PC-9 (cell line): ENCODE measurements at regions of chr1 and their contacts with region 1.

Region 1: DNA sequence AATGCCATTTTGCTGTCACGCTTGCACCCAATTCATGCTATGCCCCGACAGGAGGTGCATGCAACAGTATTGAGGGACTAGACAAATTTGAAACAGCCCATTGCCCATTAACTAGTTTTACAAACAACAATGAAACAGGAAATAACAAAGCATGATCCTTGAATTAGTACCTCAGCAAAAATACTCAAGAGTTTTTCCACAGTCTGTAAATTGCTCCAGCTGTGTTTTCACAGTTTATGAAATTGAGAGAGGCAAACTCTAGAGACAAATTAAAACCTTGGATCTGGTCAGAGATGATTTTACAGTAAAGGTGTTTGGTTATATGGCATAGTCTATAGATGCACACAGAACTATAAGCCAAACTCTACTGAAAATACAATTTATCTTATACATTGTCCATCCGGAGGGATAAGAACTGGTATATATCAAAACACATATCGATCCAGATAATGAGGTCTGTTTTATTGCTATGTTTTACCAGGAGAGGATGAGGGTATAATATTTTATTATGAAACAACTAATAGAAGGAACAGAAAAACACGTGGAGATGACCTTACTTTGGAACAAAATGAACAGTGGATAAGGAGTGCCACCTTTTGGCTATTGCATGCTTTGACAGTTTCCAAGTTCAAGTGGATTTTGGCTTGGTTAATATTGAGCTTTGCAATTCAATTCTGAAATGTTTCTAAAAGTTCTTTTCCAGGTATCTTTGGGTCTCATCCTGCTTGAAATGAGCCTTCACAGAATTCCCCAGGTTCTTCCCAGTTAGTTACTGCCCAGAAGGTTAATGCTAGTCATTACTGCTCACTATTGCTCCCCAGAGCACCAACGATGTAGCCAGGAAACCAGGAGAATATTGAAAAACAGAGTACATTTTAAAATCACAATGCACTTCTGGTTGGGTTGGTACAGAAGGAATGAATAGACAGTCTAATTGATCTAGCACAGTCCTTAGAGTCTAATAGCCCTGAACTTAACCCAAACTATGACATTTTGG is 45.7 kb downstream of the ZC3H11B start:
- DNase-seq: no peak
- H3K4me3 ChIP-seq: no peak overlapping the region
- H3K27ac ChIP-seq: no peak overlapping the region
- H3K4me1 ChIP-seq: peaks cover 19% of the 10 kb centered on the region
- H3K27me3 ChIP-seq: no peaks in the 10 kb centered on the region
- CTCF ChIP-seq: peak; percentile 65

Region 2: GRCh38 chr1:219283541-219283940 is 283.7 kb before region 1 on chr1:
- CTCF ChIA-PET with region 1: no interaction called
- POLR2A ChIA-PET with region 1: no interaction called
- intact Hi-C with region 1: no loop called
- DNase-seq: no peak
- H3K4me3 ChIP-seq: no peak overlapping the region
- H3K27ac ChIP-seq: no peak overlapping the region
- H3K4me1 ChIP-seq: no peaks in the 10 kb centered on the region
- H3K27me3 ChIP-seq: no peaks in the 10 kb centered on the region
- CTCF ChIP-seq: no peak

Region 3: DNA sequence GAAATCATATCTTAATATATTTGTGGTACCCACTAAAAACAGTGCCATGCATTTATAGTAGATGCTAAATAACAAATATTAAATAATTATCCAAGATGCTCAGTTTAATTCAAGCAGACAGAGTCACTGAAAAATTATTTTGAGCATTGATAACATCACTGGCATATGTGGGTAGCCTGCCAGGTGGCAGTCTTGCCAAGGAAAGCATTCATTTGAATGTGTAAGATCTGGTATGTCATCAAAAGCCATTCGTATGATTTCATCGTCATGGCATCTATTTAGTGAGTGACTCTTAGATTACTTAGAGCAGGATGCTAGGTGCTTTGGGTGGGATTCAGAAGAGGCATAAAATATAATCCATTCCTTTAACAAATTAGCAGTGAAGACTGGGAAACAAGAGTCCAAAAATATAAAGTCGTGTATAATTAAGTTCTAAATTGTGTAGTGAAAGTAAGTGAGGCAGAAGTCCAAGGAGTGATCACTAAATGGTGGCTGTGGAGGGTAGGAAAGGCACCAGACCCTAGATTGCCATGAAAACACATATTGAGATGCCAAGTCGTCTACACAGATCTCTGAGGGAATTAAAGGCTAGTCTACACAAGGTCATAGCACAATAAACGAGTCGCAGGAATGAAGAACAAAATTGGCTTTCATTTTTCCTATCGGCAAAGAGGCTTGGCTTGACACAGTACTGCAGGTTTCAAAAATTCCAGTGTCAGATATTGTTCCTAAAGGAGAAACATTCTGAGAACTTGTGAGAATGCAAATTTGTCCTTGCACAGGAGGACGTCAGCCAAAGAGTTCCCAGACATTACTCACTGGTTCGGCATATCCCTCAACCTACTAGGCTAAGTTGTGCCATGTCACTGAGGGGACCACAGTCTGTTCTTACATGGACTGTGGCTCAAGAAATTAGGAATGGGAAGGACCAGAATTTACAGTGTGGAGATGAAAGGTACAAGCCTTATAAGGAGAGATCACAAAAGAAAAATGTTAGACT is 262.7 kb before region 1 on chr1:
- CTCF ChIA-PET with region 1: no interaction called
- POLR2A ChIA-PET with region 1: no interaction called
- intact Hi-C with region 1: loop called (anchors 2 kb)
- DNase-seq: peak; percentile 37 to 49
- H3K4me3 ChIP-seq: no peak overlapping the region
- H3K27ac ChIP-seq: no peak overlapping the region
- H3K4me1 ChIP-seq: no peaks in the 10 kb centered on the region
- H3K27me3 ChIP-seq: no peaks in the 10 kb centered on the region
- CTCF ChIP-seq: peak; percentile 47; the same call in 1 of the 2 replicates

Region 4: GRCh38 chr1:219533282-219533681 is 34.0 kb before region 1 on chr1:
- CTCF ChIA-PET with region 1: no interaction called
- POLR2A ChIA-PET with region 1: no interaction called
- intact Hi-C with region 1: no loop called
- DNase-seq: no peak
- H3K4me3 ChIP-seq: no peak overlapping the region
- H3K27ac ChIP-seq: no peak overlapping the region
- H3K4me1 ChIP-seq: no peaks in the 10 kb centered on the region
- H3K27me3 ChIP-seq: no peaks in the 10 kb centered on the region
- CTCF ChIP-seq: no peak

Region 5: GRCh38 chr1:219660666-219661463 is 93.6 kb after region 1 on chr1:
- CTCF ChIA-PET with region 1: no interaction called
- POLR2A ChIA-PET with region 1: no interaction called
- intact Hi-C with region 1: loop called (anchors 5 kb)
- DNase-seq: peak in 1 of 2 experiments; percentile 67
- H3K4me3 ChIP-seq: no peak overlapping the region
- H3K27ac ChIP-seq: no peak overlapping the region
- H3K4me1 ChIP-seq: peaks cover 17% of the 10 kb centered on the region; the same call in 1 of the 2 replicates
- H3K27me3 ChIP-seq: no peaks in the 10 kb centered on the region
- CTCF ChIP-seq: peak; percentile 34; the same call in 1 of the 2 replicates

Region 6: GRCh38 chr1:219812491-219813203 is 245.4 kb after region 1 on chr1:
- CTCF ChIA-PET with region 1: no interaction called
- POLR2A ChIA-PET with region 1: no interaction called
- intact Hi-C with region 1: loop called (anchors 5 kb)
- DNase-seq: peak; percentile 45 to 67
- H3K4me3 ChIP-seq: no peak overlapping the region
- H3K27ac ChIP-seq: no peak overlapping the region
- H3K4me1 ChIP-seq: no peaks in the 10 kb centered on the region
- H3K27me3 ChIP-seq: peaks cover 5% of the 10 kb centered on the region; the same call in 1 of the 2 replicates
- CTCF ChIP-seq: peak; percentile 93

Region 7: GRCh38 chr1:219906924-219907771 is 339.9 kb after region 1 on chr1:
- CTCF ChIA-PET with region 1: no interaction called
- POLR2A ChIA-PET with region 1: no interaction called
- intact Hi-C with region 1: no loop called
- DNase-seq: no peak
- H3K4me3 ChIP-seq: no peak overlapping the region
- H3K27ac ChIP-seq: no peak overlapping the region
- H3K4me1 ChIP-seq: no peaks in the 10 kb centered on the region
- H3K27me3 ChIP-seq: no peaks in the 10 kb centered on the region
- CTCF ChIP-seq: no peak